Activated CD4-positive, alpha-beta memory T cell treated with anti-CD3 and anti-CD28 coated beads for 36 hours (primary cell): ENCODE measurements at regions of chr10 and their contacts with region 1.

Region 1: GRCh38 chr10:79242620-79243152 is 104.6 kb upstream of the PPIF start:
- DNase-seq: peak; percentile 79
- H3K4me3 Mint-ChIP-seq: peak overlapping the region; percentile 76
- H3K27ac Mint-ChIP-seq: peak overlapping the region; percentile 91
- H3K4me1 Mint-ChIP-seq: peaks cover 55% of the 10 kb centered on the region
- H3K27me3 Mint-ChIP-seq: no peaks in the 10 kb centered on the region

Region 2: GRCh38 chr10:78029269-78030226 is 1213.1 kb before region 1 on chr10 and contains the start of gene POLR3A:
- CTCF ChIA-PET with region 1: no interaction called
- POLR2A ChIA-PET with region 1: no interaction called
- intact Hi-C with region 1: loop called (anchors 1 kb)
- DNase-seq: peak; percentile 94
- H3K4me3 Mint-ChIP-seq: peak within 1 kb of the TSS; percentile 99
- H3K27ac Mint-ChIP-seq: peak within 1 kb of the TSS; percentile 93
- H3K4me1 Mint-ChIP-seq: peaks cover 33% of the 10 kb centered on the region
- H3K27me3 Mint-ChIP-seq: no peaks in the 10 kb centered on the region
- total RNA-seq, gene POLR3A: 16.6 to 17.0 TPM

Region 3: DNA sequence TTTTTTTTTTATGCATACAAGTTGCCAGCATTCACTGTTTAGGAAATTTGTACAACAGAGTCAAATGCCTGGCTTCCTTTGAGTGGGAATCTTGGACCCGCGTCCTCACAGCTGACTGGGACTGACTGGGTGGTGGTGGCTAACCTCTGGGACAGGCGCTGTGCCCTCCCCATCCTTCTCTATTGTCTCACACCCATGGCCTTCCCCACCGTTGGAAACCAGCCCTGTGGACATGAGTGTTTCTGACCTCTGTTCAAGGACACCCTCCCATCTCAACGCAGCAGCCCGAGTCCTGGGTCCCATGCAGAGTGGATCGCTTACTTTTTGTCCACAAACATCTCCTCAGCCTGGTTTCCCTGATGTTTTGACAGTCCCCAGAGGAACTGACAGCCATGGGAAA is 20.5 kb before region 1 on chr10:
- CTCF ChIA-PET with region 1: no interaction called
- POLR2A ChIA-PET with region 1: no interaction called
- intact Hi-C with region 1: no loop called
- DNase-seq: no peak
- H3K4me3 Mint-ChIP-seq: no peak overlapping the region
- H3K27ac Mint-ChIP-seq: no peak overlapping the region
- H3K4me1 Mint-ChIP-seq: no peaks in the 10 kb centered on the region
- H3K27me3 Mint-ChIP-seq: no peaks in the 10 kb centered on the region

Region 4: GRCh38 chr10:79266543-79267312 is 24.0 kb after region 1 on chr10:
- CTCF ChIA-PET with region 1: no interaction called
- POLR2A ChIA-PET with region 1: interaction called, 4 read pairs
- intact Hi-C with region 1: loop called (anchors 1 kb)
- DNase-seq: peak; percentile 67
- H3K4me3 Mint-ChIP-seq: no peak overlapping the region
- H3K27ac Mint-ChIP-seq: peak overlapping the region; percentile 4
- H3K4me1 Mint-ChIP-seq: peaks cover 23% of the 10 kb centered on the region
- H3K27me3 Mint-ChIP-seq: no peaks in the 10 kb centered on the region

Region 5: GRCh38 chr10:79322616-79323543 is 80.2 kb after region 1 on chr10:
- CTCF ChIA-PET with region 1: no interaction called
- POLR2A ChIA-PET with region 1: interaction called, 7 read pairs
- intact Hi-C with region 1: loop called (anchors 1 kb)
- DNase-seq: peak; percentile 91
- H3K4me3 Mint-ChIP-seq: peak overlapping the region; percentile 39
- H3K27ac Mint-ChIP-seq: peak overlapping the region; percentile 92
- H3K4me1 Mint-ChIP-seq: peaks cover 69% of the 10 kb centered on the region
- H3K27me3 Mint-ChIP-seq: no peaks in the 10 kb centered on the region